HepG2 (cell line): ENCODE measurements at regions of chr4 and their contacts with region 1.

Region 1: GRCh38 chr4:184983672-184984356 is 34.5 kb upstream of the HELT start:
- DNase-seq: peak; percentile 42
- ATAC-seq: peak; percentile 91
- H3K4me3 ChIP-seq: no peak overlapping the region
- H3K27ac ChIP-seq: no peak overlapping the region
- H3K4me1 ChIP-seq: no peaks in the 10 kb centered on the region
- H3K27me3 ChIP-seq: peaks cover 4 to 15% of the 10 kb centered on the region in 2 experiments; a peak in 2 of 5 replicates
- CTCF ChIP-seq: peak; percentile 78
- EP300 ChIP-seq: no peak
- POLR2A ChIP-seq: no peak
- RAD21 ChIP-seq: peak; percentile 62

Region 2: GRCh38 chr4:184805462-184806228 is 178.2 kb before region 1 on chr4:
- CTCF ChIA-PET with region 1: no interaction called
- POLR2A ChIA-PET with region 1: no interaction called
- in situ Hi-C with region 1: no loop called
- intact Hi-C with region 1: loop called (anchors 10 kb)
- DNase-seq: no peak
- ATAC-seq: peak; percentile 57
- H3K4me3 ChIP-seq: no peak overlapping the region
- H3K27ac ChIP-seq: no peak overlapping the region
- H3K4me1 ChIP-seq: peaks cover 51% of the 10 kb centered on the region
- H3K27me3 ChIP-seq: no peaks in the 10 kb centered on the region
- CTCF ChIP-seq: no peak
- EP300 ChIP-seq: no peak
- POLR2A ChIP-seq: no peak
- RAD21 ChIP-seq: no peak

Region 3: GRCh38 chr4:184825896-184826690 is 157.7 kb before region 1 on chr4 and contains the start of gene ACSL1:
- CTCF ChIA-PET with region 1: no interaction called
- POLR2A ChIA-PET with region 1: no interaction called
- in situ Hi-C with region 1: no loop called
- intact Hi-C with region 1: loop called (anchors 5 kb)
- DNase-seq: peak; percentile 39
- ATAC-seq: peak; percentile 85
- H3K4me3 ChIP-seq: peak within 1 kb of the TSS; percentile 58 to 81 (median 75)
- H3K27ac ChIP-seq: no peak within 1 kb of the TSS
- H3K4me1 ChIP-seq: peaks cover 40% of the 10 kb centered on the region
- H3K27me3 ChIP-seq: peaks cover 0 to 3% of the 10 kb centered on the region in 2 experiments; a peak in 1 of 5 replicates
- CTCF ChIP-seq: no peak
- EP300 ChIP-seq: no peak
- POLR2A ChIP-seq: peak in 1 of 2 experiments; percentile 54; a peak in 2 of 4 replicates
- RAD21 ChIP-seq: 0 out of 2 replicates have a peak, but pooled peaks have one; percentile 5
- total RNA-seq, gene ACSL1: 29.8 and 38.2 TPM in 2 replicates

Region 4: DNA sequence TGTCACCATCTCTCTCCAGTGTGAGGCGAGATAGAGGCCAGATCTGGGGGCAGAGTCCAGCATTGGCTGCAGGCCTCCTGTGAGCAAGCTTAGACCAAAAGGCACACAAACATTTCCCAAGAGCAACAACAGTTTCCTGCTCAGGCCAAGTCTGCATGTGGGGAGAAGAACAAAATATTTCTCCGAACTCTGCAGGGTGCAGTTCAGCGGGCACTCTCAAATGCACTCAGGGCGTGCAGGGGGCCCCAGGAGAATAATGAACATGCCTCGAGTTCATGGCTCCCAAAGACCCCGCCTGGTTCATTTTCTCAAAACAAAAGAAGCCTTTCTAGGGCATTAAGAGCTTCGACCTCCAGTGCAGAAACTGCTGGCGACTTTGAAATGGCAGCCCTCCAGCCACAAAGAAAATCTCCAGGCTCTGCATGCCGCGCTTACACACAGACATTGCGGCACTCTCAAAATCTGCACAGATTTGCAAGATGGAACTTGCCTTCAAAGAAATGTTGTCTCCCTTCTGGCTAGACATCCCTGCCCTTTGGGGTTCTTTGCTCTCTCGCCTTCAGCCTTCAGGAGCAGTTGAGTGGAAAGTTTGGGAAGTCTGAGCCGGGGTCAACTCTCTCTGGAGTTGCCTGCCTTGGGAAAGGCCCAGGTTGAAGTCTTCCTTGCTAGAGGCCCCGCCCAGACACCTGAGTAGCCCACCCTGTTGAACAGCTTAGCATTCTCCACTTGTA is 23.1 kb before region 1 on chr4:
- CTCF ChIA-PET with region 1: no interaction called
- POLR2A ChIA-PET with region 1: no interaction called
- in situ Hi-C with region 1: no loop called
- intact Hi-C with region 1: loop called (anchors 1 kb)
- DNase-seq: peak; percentile 54
- ATAC-seq: peak; percentile 92
- H3K4me3 ChIP-seq: peak overlapping the region; percentile 27 to 42 (median 37); a peak in 5 of 6 replicates
- H3K27ac ChIP-seq: peak overlapping the region; percentile 37
- H3K4me1 ChIP-seq: peaks cover 36% of the 10 kb centered on the region
- H3K27me3 ChIP-seq: peaks cover 0 to 22% of the 10 kb centered on the region in 2 experiments; a peak in 2 of 5 replicates
- CTCF ChIP-seq: peak; percentile 37
- EP300 ChIP-seq: 0 out of 4 replicates have a peak, but pooled peaks of 1 of the 2 experiments have one; percentile 28
- POLR2A ChIP-seq: no peak
- RAD21 ChIP-seq: no peak

Region 5: GRCh38 chr4:185209031-185209851 is 225.4 kb after region 1 on chr4 and contains the start of gene SNX25:
- CTCF ChIA-PET with region 1: no interaction called
- POLR2A ChIA-PET with region 1: no interaction called
- in situ Hi-C with region 1: no loop called
- intact Hi-C with region 1: no loop called
- DNase-seq: peak; percentile 73
- ATAC-seq: peak; percentile 94
- H3K4me3 ChIP-seq: peak within 1 kb of the TSS; percentile 96 to 99 (median 99)
- H3K27ac ChIP-seq: peak within 1 kb of the TSS; percentile 70
- H3K4me1 ChIP-seq: peaks cover 58% of the 10 kb centered on the region
- H3K27me3 ChIP-seq: no peaks in the 10 kb centered on the region; a peak in 1 of 5 replicates
- CTCF ChIP-seq: peak; percentile 52
- EP300 ChIP-seq: peak in 1 of 2 experiments; percentile 49; a peak in 1 of 4 replicates
- POLR2A ChIP-seq: 0 out of 4 replicates have a peak, but pooled peaks of 1 of the 2 experiments have one; percentile 6
- RAD21 ChIP-seq: peak; percentile 77
- total RNA-seq, gene SNX25: 19.7 and 23.4 TPM in 2 replicates